ENCODE measurements at regions of chr1 and their contacts with region 1.

Region 1: GRCh38 chr1:6554031-6554906 is at the start of gene NOL9:
- DNase-seq: peak; percentile 93
- H3K4me3 Mint-ChIP-seq: peak within 1 kb of the TSS; percentile 87
- H3K27ac Mint-ChIP-seq: peak within 1 kb of the TSS; percentile 81
- H3K4me1 Mint-ChIP-seq: peaks cover 7% of the 10 kb centered on the region
- H3K27me3 Mint-ChIP-seq: no peaks in the 10 kb centered on the region
- total RNA-seq, gene NOL9: 50.4 and 58.9 TPM in 2 replicates

Region 2: DNA sequence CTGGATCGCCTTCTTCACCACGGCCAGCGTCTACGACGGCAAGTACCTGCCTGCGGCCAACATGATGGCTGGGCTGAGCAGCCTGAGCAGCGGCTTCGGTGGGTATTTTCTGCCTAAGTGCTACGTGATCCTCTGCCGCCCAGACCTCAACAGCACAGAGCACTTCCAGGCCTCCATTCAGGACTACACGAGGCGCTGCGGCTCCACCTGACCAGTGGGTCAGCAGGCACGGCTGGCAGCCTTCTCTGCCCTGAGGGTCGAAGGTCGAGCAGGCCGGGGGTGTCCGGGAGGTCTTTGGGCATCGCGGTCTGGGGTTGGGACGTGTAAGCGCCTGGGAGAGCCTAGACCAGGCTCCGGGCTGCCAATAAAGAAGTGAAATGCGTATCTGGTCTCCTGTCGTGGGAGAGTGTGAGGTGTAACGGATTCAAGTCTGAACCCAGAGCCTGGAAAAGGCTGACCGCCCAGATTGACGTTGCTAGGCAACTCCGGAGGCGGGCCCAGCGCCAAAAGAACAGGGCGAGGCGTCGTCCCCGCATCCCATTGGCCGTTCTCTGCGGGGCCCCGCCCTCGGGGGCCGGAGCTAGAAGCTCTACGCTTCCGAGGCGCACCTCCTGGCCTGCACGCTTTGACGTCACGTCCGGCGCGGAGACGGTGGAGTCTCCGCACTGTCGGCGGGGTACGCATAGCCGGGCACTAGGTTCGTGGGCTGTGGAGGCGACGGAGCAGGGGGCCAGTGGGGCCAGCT is 25.3 kb after region 1 on chr1 and contains the start of gene ZBTB48:
- intact Hi-C with region 1: loop called (anchors 1 kb)
- DNase-seq: peak; percentile 97
- H3K4me3 Mint-ChIP-seq: peak within 1 kb of the TSS; percentile 95
- H3K27ac Mint-ChIP-seq: peak within 1 kb of the TSS; percentile 98
- H3K4me1 Mint-ChIP-seq: peaks cover 36% of the 10 kb centered on the region
- H3K27me3 Mint-ChIP-seq: no peaks in the 10 kb centered on the region
- total RNA-seq, gene ZBTB48: 34.5 and 35.7 TPM in 2 replicates

Region 3: DNA sequence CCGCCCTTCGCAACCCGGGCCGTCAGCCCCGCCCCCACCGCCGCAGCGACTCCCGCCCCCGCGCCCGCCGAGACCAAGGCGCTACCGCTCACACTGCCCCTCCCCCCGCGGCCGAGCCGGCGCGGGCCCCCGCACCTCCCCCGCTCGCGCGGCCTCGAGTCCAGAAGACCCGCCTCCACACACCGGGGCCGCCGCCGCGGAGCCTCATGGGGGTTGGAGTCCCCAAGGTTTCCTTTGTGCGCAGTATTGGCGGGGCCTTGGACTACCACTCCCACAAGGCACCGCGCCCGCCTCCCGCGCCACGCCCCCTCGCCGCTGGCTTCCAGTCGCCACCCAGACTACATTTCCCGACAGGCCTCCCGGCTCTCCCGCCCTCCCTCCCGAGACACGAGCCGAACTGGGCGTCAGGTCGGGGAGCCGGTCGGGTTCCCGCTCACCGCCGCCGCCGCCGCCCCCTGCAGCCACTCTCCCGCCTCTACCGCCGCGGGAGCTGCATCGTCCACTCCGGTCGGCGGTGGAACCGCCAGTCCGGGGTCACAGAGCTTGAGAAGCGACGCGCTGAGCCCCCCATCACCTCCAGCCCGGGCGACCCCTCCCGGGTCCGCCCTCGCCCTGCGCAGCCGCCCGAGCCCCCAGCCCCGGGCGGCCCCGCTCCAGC is 59.2 kb after region 1 on chr1 and contains the start of gene PHF13:
- intact Hi-C with region 1: loop called (anchors 1 kb)
- DNase-seq: peak; percentile 99
- H3K4me3 Mint-ChIP-seq: peak within 1 kb of the TSS; percentile 85
- H3K27ac Mint-ChIP-seq: peak within 1 kb of the TSS; percentile 82
- H3K4me1 Mint-ChIP-seq: peaks cover 24% of the 10 kb centered on the region
- H3K27me3 Mint-ChIP-seq: peaks cover 4% of the 10 kb centered on the region
- total RNA-seq, gene PHF13: 18.8 and 19.5 TPM in 2 replicates

Region 4: DNA sequence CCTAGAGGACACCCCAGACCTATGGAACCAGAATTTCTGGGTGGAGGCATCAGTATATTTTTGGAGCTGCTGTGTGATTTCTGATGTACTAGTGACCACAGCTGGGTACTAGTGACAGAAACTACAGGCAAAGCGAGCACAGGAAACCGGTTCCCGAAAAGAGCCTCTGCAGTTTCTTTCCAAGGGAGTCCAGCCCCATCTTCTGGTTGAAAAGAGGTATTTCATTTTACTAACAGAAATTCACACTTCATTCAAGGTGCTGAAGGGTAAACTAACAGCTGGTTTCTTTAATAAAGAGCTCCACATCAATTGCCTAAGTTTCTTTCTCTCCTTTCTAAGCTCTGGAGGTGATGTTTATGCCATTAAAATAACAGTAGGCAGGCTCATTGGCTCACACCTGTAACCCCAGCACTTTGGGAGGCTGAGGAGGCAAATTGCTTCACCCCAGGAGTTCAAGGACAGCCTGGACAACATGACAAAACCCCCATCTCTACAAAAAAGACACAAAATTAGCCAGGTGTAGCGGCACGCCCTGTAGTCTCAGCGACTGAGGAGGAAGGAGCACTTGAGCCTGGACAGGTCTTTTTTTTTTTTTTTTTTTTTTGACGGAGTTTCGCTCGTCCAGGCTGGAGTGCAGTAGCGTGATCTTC is 92.4 kb after region 1 on chr1:
- intact Hi-C with region 1: loop called (anchors 1 kb)
- DNase-seq: no peak
- H3K4me3 Mint-ChIP-seq: no peak overlapping the region
- H3K27ac Mint-ChIP-seq: no peak overlapping the region
- H3K4me1 Mint-ChIP-seq: peaks cover 7% of the 10 kb centered on the region
- H3K27me3 Mint-ChIP-seq: no peaks in the 10 kb centered on the region

Region 5: GRCh38 chr1:7783826-7784491 is 1229.7 kb after region 1 on chr1 and contains the start of gene PER3:
- intact Hi-C with region 1: loop called (anchors 5 kb)
- DNase-seq: peak; percentile 87
- H3K4me3 Mint-ChIP-seq: peak within 1 kb of the TSS; percentile 74
- H3K27ac Mint-ChIP-seq: no peak within 1 kb of the TSS
- H3K4me1 Mint-ChIP-seq: peaks cover 21% of the 10 kb centered on the region
- H3K27me3 Mint-ChIP-seq: peaks cover 7% of the 10 kb centered on the region
- total RNA-seq, gene PER3: 4.0 and 4.4 TPM in 2 replicates